ENCODE measurements at regions of chr4 and their contacts with region 1.

Region 1: DNA sequence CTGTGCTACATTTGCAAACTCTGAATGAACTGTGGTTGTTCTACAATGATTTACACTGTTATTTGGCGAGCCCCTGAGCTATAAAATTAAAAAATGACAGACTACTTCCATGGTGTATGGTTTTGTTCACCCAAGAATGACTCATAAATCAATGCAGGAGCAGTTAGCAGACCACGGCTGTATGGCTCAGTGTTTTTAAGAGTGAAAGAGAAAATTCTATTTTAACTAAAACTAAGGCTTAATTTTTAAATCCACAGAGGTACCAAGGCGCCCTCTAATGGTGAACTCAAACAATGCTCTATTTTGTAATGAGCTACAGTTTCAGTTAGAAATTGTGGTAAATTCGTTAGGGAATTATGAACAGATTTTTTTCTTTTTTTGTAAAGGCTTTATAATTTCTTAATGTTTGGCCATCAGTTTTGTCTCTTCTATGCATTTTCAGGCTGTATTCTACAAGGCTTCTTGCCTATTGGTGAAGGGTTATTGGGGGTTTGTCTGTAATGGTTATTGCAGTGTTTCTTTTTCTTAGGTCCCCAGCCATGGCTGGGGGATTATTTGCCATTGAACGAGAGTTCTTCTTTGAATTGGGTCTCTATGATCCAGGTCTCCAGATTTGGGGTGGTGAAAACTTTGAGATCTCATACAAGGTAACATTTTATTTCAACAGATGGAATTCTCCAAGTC is 32.5 kb downstream of the HMGB2 start:
- H3K4me3 ChIP-seq: no peak overlapping the region
- H3K27ac ChIP-seq: no peak overlapping the region
- H3K4me1 ChIP-seq: no peaks in the 10 kb centered on the region
- CTCF ChIP-seq: no peak

Region 2: DNA sequence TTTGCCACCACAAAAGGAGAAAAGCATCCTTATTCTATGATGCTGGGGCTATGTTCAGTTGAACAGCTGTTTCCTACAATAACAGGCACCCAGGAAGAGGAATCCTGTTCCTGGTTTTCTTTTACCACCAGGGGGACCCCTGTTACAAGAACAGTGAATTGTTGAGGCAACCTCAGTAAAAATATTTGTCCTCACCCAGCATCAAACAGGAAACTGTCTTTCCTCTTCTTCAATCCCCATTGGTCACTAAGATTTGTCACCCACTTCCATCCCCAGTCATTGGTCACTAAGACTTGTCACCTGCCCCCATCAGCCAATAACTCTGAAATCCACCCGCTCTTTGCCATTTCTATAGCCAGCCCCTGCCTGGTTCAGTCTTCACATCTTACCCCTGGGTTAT is 276.5 kb before region 1 on chr4:
- CTCF ChIA-PET with region 1: interaction called, 27 read pairs
- POLR2A ChIA-PET with region 1: no interaction called
- H3K4me3 ChIP-seq: no peak overlapping the region
- H3K27ac ChIP-seq: no peak overlapping the region
- H3K4me1 ChIP-seq: no peaks in the 10 kb centered on the region
- CTCF ChIP-seq: peak; percentile 33

Region 3: GRCh38 chr4:173181769-173182354 is 119.8 kb before region 1 on chr4:
- CTCF ChIA-PET with region 1: no interaction called
- POLR2A ChIA-PET with region 1: no interaction called
- H3K4me3 ChIP-seq: no peak overlapping the region
- H3K27ac ChIP-seq: no peak overlapping the region
- H3K4me1 ChIP-seq: peaks cover 34% of the 10 kb centered on the region
- CTCF ChIP-seq: no peak

Region 4: GRCh38 chr4:173264684-173265185 is 36.9 kb before region 1 on chr4:
- CTCF ChIA-PET with region 1: interaction called, 11 read pairs
- POLR2A ChIA-PET with region 1: no interaction called
- H3K4me3 ChIP-seq: no peak overlapping the region
- H3K27ac ChIP-seq: no peak overlapping the region
- H3K4me1 ChIP-seq: peaks cover 5% of the 10 kb centered on the region
- CTCF ChIP-seq: no peak

Region 5: GRCh38 chr4:173288296-173288695 is 13.4 kb before region 1 on chr4:
- CTCF ChIA-PET with region 1: interaction called, 35 read pairs
- POLR2A ChIA-PET with region 1: no interaction called
- H3K4me3 ChIP-seq: no peak overlapping the region
- H3K27ac ChIP-seq: no peak overlapping the region
- H3K4me1 ChIP-seq: no peaks in the 10 kb centered on the region
- CTCF ChIP-seq: no peak